ENCODE measurements at regions of chr1 and their contacts with region 1.

Region 1: DNA sequence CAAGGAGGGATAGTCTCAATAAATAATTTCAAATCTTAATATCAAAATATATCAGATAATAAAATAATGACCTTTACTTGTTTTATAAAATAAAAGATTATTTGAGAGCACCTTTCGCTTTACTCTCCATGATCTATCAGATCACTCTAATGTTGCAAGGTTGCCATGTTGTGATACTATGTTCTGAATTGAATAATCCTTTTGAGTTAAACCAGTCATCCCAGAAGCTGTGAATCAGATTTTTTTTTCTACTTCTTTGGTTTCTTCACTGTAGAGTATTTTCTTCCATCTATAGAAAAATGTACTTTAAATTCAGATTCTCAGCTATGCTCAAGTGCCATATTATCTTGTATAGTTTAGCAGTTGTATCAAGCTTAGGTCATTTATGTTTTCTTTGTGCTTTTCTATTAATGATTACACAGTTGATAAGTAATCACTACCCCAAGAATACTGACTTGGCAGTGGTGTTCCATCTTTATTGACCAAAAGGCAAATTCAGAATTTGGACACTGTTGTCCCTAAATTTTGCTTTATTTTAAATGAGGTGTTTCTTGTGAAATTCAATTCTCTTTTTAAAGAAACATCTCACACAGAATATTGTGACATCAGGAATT is 32.9 kb downstream of the BRDT start:
- DNase-seq: no peak
- ATAC-seq: no peak
- H3K4me3 ChIP-seq: no peak overlapping the region
- H3K27ac ChIP-seq: no peak overlapping the region
- H3K4me1 ChIP-seq: no peaks in the 10 kb centered on the region
- H3K27me3 ChIP-seq: no peaks in the 10 kb centered on the region
- CTCF ChIP-seq: no peak

Region 2: GRCh38 chr1:91968334-91968733 is 13.8 kb before region 1 on chr1:
- CTCF ChIA-PET with region 1: no interaction called
- POLR2A ChIA-PET with region 1: interaction called, 13 read pairs
- in situ Hi-C with region 1: no loop called
- intact Hi-C with region 1: no loop called
- DNase-seq: no peak
- ATAC-seq: no peak
- H3K4me3 ChIP-seq: no peak overlapping the region
- H3K27ac ChIP-seq: no peak overlapping the region
- H3K4me1 ChIP-seq: no peaks in the 10 kb centered on the region
- H3K27me3 ChIP-seq: no peaks in the 10 kb centered on the region
- CTCF ChIP-seq: no peak